Heart left ventricle (tissue), 16 donors: ENCODE measurements at regions of chr21 and their contacts with region 1.

Region 1: GRCh38 chr21:42467140-42467983 is 28.7 kb downstream of the RSPH1 start:
- DNase-seq: no peak
- ATAC-seq: peak in 3 of 4 donors; percentile 68 to 76 (median 70)
- H3K4me3 ChIP-seq: no peak overlapping the region
- H3K27ac ChIP-seq: no peak overlapping the region
- H3K4me1 ChIP-seq: peaks cover 0 to 27% (median 0%) of the 10 kb centered on the region in 12 donors
- H3K27me3 ChIP-seq: no peaks in the 10 kb centered on the region
- CTCF ChIP-seq: peak in 8 of 12 donors; percentile 11 to 48 (median 31)
- POLR2A ChIP-seq: no peak

Region 2: GRCh38 chr21:42537106-42537742 is 69.9 kb after region 1 on chr21:
- intact Hi-C with region 1: loop called in 1 of 10 experiments (anchors 2 kb)
- DNase-seq: no peak
- ATAC-seq: no peak
- H3K4me3 ChIP-seq: no peak overlapping the region
- H3K27ac ChIP-seq: no peak overlapping the region
- H3K4me1 ChIP-seq: peaks cover 0 to 34% (median 10%) of the 10 kb centered on the region in 12 donors
- H3K27me3 ChIP-seq: no peaks in the 10 kb centered on the region
- CTCF ChIP-seq: peak in 5 of 12 donors; percentile 12 to 33 (median 17)
- POLR2A ChIP-seq: no peak